ENCODE measurements at regions of chr3 and their contacts with region 1.

Region 1: GRCh38 chr3:115783938-115784738 is 160.8 kb downstream of the GAP43 start:
- DNase-seq: peak; percentile 50
- H3K4me3 ChIP-seq: peak overlapping the region; percentile 61
- H3K27me3 ChIP-seq: no peaks in the 10 kb centered on the region
- CTCF ChIP-seq: peak; percentile 84

Region 2: DNA sequence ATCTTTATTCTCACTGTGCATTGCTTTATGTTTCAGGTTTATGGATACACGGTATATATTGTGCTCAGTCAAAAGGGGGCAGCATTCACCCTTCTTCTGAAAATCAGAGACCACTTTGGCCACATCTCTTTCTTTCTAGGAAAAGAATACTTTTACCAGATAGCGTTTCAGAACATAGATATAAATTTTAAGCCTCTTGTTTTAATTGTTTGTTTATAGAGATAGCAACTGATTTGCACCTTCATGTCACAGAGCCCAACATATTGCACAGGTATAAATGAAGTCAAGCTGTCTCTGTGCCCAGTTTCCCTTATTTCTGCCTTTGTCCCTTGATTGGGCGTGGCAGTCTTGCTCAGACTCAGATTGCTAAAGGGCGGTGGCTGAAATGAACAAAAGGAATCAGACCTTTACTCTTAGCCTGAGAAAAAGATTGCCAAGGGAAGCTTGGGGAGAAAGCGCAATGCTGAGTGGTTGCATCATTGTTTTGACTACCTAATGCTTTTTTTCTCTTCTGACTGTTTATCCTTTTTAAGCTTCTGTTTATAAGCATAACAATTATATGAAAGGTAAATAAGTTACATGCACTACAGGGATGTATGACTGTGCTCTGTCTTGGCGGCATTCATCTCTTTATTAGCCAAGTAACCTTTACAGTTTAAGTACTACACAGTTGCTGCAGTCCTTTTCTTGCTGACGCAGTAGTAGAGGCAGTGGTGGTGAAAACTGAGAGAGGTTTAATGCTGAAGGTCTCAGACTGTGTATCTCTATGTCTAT is 566.3 kb before region 1 on chr3:
- CTCF ChIA-PET with region 1: interaction called, 21 read pairs
- POLR2A ChIA-PET with region 1: no interaction called
- DNase-seq: peak; percentile 29
- H3K4me3 ChIP-seq: no peak overlapping the region
- H3K27me3 ChIP-seq: no peaks in the 10 kb centered on the region
- CTCF ChIP-seq: peak; percentile 72

Region 3: DNA sequence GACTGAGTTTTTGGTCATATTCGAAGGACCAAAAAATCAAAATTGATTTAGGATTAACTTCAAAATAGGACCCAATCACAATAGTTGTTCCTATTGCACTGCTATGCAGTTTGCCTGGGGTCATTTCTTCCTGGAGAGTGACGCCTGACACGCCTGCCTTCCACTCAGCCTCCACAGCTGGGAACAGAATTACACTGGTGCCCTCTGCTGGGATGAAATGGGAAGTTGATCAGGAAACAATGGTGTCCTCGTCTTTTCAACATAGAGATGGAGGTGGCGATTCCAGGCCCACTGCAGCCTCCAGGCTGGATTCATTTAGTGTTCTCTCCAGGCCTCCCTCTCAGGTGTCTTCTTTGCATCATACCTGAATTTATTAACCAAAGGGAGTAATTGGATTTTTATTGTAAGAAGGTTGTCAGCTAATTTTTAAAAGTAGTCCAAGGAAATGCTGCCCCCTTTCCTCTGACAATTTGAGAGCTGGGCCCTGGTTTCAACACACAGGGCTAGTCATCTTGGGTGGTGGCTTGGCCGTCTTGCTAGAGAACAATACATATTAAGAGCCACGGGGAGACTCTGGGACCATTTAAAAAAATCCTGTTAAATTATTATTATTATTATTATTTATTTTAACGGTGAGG is 91.1 kb before region 1 on chr3:
- CTCF ChIA-PET with region 1: interaction called, 20 read pairs
- POLR2A ChIA-PET with region 1: no interaction called
- DNase-seq: no peak
- H3K4me3 ChIP-seq: no peak overlapping the region
- H3K27me3 ChIP-seq: no peaks in the 10 kb centered on the region
- CTCF ChIP-seq: peak; percentile 77

Region 4: DNA sequence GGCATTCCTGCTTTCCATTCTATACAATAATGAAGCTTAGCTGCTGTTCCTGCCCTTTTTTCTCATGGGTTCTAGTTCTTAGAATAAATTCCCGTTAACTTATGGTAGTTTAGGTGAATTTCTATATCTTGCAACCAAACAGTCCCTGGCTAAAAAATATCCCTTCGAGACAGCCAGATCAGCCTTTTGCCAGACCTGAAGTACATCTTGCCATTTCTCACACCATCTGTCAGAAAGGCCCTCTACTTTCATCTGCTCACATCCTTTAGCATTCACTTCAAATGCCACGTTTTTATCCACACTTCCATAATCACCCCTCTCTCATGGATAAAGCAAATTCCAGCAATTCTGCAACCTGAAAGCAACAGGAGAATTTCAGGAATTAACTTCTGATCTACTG is 15.5 kb before region 1 on chr3:
- CTCF ChIA-PET with region 1: interaction called, 12 read pairs
- POLR2A ChIA-PET with region 1: no interaction called
- DNase-seq: no peak
- H3K4me3 ChIP-seq: no peak overlapping the region
- H3K27me3 ChIP-seq: no peaks in the 10 kb centered on the region
- CTCF ChIP-seq: no peak

Region 5: DNA sequence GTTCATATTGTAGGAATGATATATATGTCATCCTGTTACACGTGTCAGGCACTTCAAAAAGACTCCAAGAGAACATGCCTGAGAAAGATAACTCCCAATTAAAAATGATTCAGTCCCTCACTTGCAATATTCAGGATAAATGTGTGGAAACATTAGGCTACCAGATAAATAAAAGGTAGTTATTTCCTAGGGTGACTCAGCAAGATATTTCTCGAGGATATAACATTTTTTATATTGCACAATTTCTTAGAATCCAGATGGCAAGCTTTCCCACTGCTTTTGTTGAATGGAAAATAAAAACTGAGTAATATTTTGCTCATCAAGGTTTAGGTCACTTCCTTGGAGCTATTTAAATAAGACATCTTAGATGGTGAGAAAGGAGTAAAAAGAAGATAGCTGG is 20.6 kb after region 1 on chr3:
- CTCF ChIA-PET with region 1: interaction called, 24 read pairs
- POLR2A ChIA-PET with region 1: interaction called, 4 read pairs
- DNase-seq: peak; percentile 94
- H3K4me3 ChIP-seq: no peak overlapping the region
- H3K27me3 ChIP-seq: no peaks in the 10 kb centered on the region
- CTCF ChIP-seq: no peak

Region 6: GRCh38 chr3:115814778-115815380 is 30.7 kb after region 1 on chr3:
- CTCF ChIA-PET with region 1: interaction called, 16 read pairs
- POLR2A ChIA-PET with region 1: no interaction called
- DNase-seq: no peak
- H3K4me3 ChIP-seq: no peak overlapping the region
- H3K27me3 ChIP-seq: no peaks in the 10 kb centered on the region
- CTCF ChIP-seq: peak; percentile 81

Region 7: DNA sequence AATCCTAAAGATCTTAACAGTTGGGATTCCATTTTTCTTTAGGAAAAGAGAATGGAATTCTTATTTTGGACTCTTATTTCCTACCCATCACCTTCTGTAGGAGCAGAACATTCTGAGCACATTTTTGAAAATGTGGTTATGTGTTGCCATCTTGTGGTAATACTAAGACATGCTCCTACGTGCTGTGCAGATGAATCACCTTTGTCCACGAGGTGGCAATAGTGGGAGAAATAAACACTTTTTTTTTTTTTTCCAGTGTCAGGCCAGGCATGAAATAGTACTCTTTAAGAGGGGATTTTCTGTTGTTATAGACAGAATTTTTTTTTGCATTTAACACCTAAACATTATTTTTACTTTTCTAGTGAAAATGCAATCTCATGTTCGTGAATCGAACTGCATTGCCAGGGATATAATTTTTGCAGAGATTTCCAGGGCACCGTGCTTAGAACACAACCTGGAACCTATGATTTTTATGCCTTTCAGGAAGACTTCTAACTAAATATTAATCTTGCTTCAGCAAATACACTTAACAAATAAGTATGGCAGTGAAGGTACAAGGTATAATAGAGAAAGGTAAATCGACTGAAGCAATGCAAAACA is 35.7 kb after region 1 on chr3:
- CTCF ChIA-PET with region 1: interaction called, 16 read pairs
- POLR2A ChIA-PET with region 1: no interaction called
- DNase-seq: peak; percentile 46
- H3K4me3 ChIP-seq: no peak overlapping the region
- H3K27me3 ChIP-seq: no peaks in the 10 kb centered on the region
- CTCF ChIP-seq: peak; percentile 90

Measured in BJ (cell line).